ENCODE measurements at regions of chr11 and their contacts with region 1.

Region 1: GRCh38 chr11:69949327-69949726 is 128.8 kb upstream of the ANO1 start:
- DNase-seq: peak; percentile 32 to 90
- H3K4me3 ChIP-seq: no peak overlapping the region
- H3K27ac ChIP-seq: peak overlapping the region; percentile 59 to 78
- H3K4me1 ChIP-seq: peaks cover 15 to 23% of the 10 kb centered on the region in 2 donors
- H3K27me3 ChIP-seq: no peaks in the 10 kb centered on the region
- CTCF ChIP-seq: no peak

Region 2: GRCh38 chr11:69925366-69926196 is 23.7 kb before region 1 on chr11:
- intact Hi-C with region 1: no loop called
- DNase-seq: peak in 1 of 2 donors; percentile 61
- H3K4me3 ChIP-seq: no peak overlapping the region
- H3K27ac ChIP-seq: peak overlapping the region; percentile 52 to 56
- H3K4me1 ChIP-seq: peaks cover 5 to 13% of the 10 kb centered on the region in 2 donors
- H3K27me3 ChIP-seq: no peaks in the 10 kb centered on the region
- CTCF ChIP-seq: no peak

Region 3: DNA sequence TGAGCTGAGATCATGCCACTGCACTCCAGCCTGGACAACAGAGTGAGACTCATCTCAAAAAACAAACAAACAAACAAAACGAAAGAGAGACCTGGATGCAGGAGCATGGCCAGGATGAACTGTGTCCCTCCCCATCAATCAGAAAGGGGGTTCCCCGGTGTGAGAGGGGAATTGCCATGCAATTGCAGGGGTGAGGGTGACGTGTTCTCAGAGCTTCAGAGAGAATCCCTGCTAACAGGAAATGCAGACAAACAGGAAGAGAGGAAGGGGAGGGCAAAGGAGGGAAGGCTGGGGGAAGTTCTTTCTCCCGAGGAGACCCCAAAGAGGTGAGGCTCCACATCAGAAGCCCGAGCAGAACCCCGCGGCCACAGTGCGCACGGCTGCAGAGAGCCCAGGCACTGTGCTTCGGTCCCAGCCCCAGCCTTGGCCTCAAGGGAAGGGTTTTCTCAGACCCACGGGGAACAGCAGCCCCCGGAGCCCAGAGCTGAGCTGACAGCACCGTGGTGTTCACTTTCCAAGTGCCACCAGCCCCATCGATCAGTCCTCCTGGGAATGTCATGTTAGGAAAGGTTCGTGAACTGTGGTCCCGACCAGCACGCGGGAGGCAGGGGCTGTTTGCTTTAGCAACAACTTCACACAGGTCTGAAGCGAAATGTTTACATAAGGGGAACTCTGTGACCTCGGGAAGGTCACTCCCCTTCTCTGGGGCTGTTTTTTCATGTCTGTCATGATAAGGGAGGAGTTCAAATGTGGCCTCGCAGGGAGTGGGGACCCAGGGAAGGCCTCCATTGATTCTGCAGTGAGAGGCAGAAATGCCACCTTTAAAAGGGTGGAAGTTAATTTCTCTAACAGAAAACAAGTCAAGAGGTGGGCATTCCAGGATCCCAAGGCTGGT is 20.8 kb after region 1 on chr11:
- intact Hi-C with region 1: loop called (anchors 2 kb)
- DNase-seq: no peak
- H3K4me3 ChIP-seq: no peak overlapping the region
- H3K27ac ChIP-seq: peak overlapping the region in 1 of 2 donors; percentile 31
- H3K4me1 ChIP-seq: peaks cover 0 to 15% of the 10 kb centered on the region in 2 donors
- H3K27me3 ChIP-seq: no peaks in the 10 kb centered on the region
- CTCF ChIP-seq: no peak

Region 4: GRCh38 chr11:69985641-69986439 is 36.5 kb after region 1 on chr11:
- intact Hi-C with region 1: loop called (anchors 5 kb)
- DNase-seq: no peak
- H3K4me3 ChIP-seq: peak overlapping the region; percentile 62 to 74
- H3K27ac ChIP-seq: peak overlapping the region; percentile 87 to 98
- H3K4me1 ChIP-seq: peaks cover 16 to 73% of the 10 kb centered on the region in 2 donors
- H3K27me3 ChIP-seq: no peaks in the 10 kb centered on the region
- CTCF ChIP-seq: no peak

Region 5: DNA sequence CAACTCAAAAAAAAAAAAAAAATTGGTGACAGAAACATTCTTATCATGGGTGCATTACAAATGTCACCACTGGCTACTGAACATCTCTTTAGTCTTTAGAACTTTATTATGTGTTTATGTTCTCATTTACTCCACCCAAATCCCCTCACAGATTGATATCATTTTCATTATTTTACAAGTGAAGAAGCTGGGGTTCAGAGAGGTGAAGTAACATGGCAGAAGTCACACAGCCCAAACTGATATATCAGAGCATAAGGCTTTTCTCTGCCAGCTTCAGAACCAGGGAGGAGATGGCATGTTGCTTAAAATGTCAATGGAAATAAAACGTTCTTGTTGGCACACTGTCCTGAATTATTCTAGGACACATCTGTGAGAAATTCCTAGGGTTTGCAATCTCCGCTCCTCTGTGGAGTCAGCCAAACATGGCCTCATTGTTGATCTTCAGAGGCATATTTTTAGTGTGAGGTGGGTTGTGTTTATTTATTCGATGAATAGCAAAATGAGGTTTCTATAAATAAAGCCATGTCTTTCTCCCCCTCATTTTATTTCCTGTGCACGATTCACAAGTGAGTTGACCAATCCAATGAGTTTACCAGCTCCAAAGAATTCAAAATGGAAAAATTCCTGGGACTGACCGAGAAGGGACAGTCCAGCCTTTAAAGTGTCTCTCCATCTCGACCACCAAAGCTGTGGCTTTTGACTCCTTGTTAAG is 55.9 kb after region 1 on chr11:
- intact Hi-C with region 1: loop called (anchors 1 kb)
- DNase-seq: peak in 1 of 2 donors; percentile 79
- H3K4me3 ChIP-seq: no peak overlapping the region
- H3K27ac ChIP-seq: peak overlapping the region; percentile 82 to 86
- H3K4me1 ChIP-seq: peaks cover 5 to 21% of the 10 kb centered on the region in 2 donors
- H3K27me3 ChIP-seq: no peaks in the 10 kb centered on the region
- CTCF ChIP-seq: no peak

Region 6: GRCh38 chr11:70290361-70291065 is 341.2 kb after region 1 on chr11:
- intact Hi-C with region 1: no loop called
- DNase-seq: no peak
- H3K4me3 ChIP-seq: no peak overlapping the region
- H3K27ac ChIP-seq: peak overlapping the region in 1 of 2 donors; percentile 15
- H3K4me1 ChIP-seq: no peaks in the 10 kb centered on the region
- H3K27me3 ChIP-seq: no peaks in the 10 kb centered on the region
- CTCF ChIP-seq: no peak